ENCODE measurements at regions of chr14 and their contacts with region 1.

Region 1: DNA sequence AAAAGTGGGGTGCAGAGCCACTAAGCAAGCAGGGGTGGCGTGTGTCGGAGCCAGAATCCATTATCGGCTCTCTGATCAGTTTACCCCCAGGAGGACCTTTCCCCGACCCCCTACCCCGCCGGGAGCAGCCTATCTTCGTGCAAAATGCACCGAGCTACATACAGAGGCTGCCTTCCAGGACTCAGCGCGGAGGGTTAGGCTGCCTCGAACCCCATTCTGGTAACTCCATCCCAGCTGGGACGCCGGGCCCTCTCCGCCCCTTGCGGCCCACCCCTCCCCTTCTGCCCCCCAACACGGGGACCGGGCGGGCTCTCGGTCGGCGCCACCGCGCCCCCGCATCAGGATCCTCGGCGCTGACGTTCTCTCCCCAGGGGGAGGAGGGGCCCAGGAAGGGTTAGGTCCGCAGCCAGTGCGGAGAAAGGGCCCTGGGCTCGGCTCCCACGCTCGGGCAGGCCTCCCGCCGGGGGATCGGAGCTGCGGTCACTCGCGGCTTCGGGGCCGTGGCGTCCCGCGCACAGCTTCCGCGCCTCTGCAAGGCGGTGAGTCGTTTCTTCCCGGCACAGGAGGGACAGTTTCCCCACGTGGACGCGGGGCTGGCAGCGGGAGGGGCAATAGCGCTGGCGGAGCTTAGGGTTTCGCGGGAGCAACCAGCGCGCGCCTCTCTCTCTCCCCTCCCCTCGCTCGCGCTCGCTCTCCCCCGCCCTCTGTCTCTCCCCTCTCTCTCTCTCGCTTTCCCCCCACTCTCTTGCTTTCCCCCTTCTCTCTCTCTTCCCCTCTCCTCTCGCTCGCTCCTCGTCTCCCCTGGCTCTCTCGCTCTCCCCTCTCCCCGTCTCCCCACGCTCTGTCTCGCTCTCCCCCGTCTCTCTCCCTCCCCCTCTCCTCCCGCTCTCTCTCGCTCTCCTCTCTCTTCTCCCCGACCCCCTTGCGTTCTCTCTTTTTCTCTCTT is 12.5 kb upstream of the MAP3K9 start:
- DNase-seq: peak; percentile 53
- H3K4me3 ChIP-seq: peak overlapping the region; percentile 60 to 68
- H3K27ac ChIP-seq: no peak overlapping the region
- H3K4me1 ChIP-seq: peaks cover 10% of the 10 kb centered on the region
- H3K27me3 ChIP-seq: no peaks in the 10 kb centered on the region
- CTCF ChIP-seq: no peak
- POLR2A ChIP-seq: no peak

Region 2: GRCh38 chr14:70972107-70972976 is 150.5 kb after region 1 on chr14:
- intact Hi-C with region 1: loop called (anchors 10 kb)
- DNase-seq: peak; percentile 95
- H3K4me3 ChIP-seq: no peak overlapping the region
- H3K27ac ChIP-seq: no peak overlapping the region
- H3K4me1 ChIP-seq: no peaks in the 10 kb centered on the region
- H3K27me3 ChIP-seq: no peaks in the 10 kb centered on the region
- CTCF ChIP-seq: peak; percentile 77 to 98 (median 92)
- POLR2A ChIP-seq: no peak

Measured in testis (tissue), 5 donors.